ENCODE measurements at regions of chr19 and their contacts with region 1.

Region 1: DNA sequence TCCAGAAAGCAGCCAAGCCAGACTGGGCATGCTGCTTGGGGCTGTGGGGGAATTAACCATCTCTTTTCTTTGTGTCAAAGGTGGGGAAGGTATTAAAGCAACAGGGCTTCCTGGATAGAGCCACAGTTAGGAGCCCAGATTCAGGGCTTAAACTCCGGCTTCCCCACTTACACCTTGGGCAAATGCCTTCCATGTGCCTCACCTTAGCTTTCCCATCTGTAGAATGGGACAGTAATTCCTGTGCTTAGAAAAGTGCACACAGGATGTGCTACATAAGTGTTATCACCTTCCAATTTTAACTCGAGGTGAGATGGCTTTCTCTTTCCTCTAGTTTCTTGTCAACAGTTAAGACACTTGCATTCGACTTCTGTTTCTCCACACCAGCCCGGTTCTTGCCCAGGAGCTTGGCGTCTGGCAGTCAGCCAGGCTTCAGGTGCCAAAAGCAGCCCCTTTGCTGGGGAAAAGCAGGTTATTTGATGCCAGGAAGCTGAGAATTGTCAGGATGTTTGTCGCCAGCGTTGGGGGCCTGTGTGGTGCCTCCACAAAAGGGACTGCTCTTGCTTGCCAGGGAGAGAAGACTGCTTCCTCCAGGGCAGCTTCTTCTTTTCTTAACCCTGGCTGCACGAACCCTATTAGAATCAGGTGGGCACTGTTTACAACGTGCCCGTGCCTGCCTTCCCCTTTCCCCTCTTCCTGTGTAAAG is 79.2 kb downstream of the SIPA1L3 start:
- DNase-seq: no peak
- ATAC-seq: no peak
- H3K4me3 ChIP-seq: no peak overlapping the region
- H3K27ac ChIP-seq: no peak overlapping the region
- H3K4me1 ChIP-seq: 0 out of 2 replicates have a peak, but pooled peaks cover 2% of the 10 kb centered on the region
- H3K27me3 ChIP-seq: no peaks in the 10 kb centered on the region
- CTCF ChIP-seq: no peak

Region 2: DNA sequence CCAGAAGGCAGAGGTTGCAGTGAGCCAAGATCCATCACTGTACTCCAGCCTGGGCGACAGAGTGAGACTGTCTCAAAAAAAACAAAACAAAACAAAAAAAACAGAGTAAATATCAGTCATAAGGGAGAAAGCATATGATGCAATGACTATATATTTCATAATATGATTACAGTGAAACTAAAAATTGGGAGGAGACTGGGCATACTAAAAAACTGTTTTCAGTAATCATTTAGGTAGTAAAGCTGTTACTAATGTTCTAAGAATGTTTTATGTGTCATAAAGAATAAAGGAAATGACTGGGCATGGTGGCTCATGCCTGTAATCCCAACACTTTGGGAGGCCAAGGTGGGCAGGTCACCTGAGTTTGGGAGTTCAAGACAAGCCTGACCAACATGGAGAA is 222.7 kb before region 1 on chr19:
- CTCF ChIA-PET with region 1: no interaction called
- POLR2A ChIA-PET with region 1: no interaction called
- in situ Hi-C with region 1: no loop called
- intact Hi-C with region 1: no loop called
- DNase-seq: peak; percentile 8
- ATAC-seq: no peak
- H3K4me3 ChIP-seq: no peak overlapping the region
- H3K27ac ChIP-seq: no peak overlapping the region
- H3K4me1 ChIP-seq: no peaks in the 10 kb centered on the region
- H3K27me3 ChIP-seq: no peaks in the 10 kb centered on the region
- CTCF ChIP-seq: no peak

Region 3: DNA sequence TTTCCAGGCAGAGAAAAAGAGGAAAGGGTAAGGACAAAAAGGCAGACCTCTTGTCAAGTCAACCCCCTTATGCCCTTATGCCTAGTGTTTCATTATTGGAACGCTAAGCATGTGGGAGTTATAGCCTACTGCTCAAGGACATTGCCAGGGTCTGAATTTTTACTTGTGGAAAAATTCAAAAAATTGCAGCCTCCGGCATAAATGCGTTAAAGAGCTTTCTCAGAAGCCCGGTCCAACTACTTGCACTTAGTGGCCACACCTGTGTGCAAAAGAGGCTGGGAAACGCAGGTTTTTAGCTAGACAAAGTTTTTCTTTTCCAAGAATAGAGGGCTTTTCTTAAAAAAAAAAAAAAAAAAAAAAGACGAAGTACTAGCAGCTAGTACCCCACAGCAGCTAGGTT is 98.0 kb after region 1 on chr19:
- CTCF ChIA-PET with region 1: no interaction called
- POLR2A ChIA-PET with region 1: interaction called, 13 read pairs
- in situ Hi-C with region 1: no loop called
- intact Hi-C with region 1: no loop called
- DNase-seq: no peak
- ATAC-seq: no peak
- H3K4me3 ChIP-seq: no peak overlapping the region
- H3K27ac ChIP-seq: no peak overlapping the region
- H3K4me1 ChIP-seq: peaks cover 14% of the 10 kb centered on the region
- H3K27me3 ChIP-seq: no peaks in the 10 kb centered on the region
- CTCF ChIP-seq: no peak

Region 4: GRCh38 chr19:38351865-38352395 is 365.7 kb after region 1 on chr19:
- CTCF ChIA-PET with region 1: no interaction called
- POLR2A ChIA-PET with region 1: no interaction called
- in situ Hi-C with region 1: no loop called
- intact Hi-C with region 1: no loop called
- DNase-seq: no peak
- ATAC-seq: peak; percentile 49; the same call in 1 of the 2 replicates
- H3K4me3 ChIP-seq: no peak overlapping the region
- H3K27ac ChIP-seq: no peak overlapping the region
- H3K4me1 ChIP-seq: no peaks in the 10 kb centered on the region
- H3K27me3 ChIP-seq: no peaks in the 10 kb centered on the region
- CTCF ChIP-seq: no peak

Measured in Panc1 (cell line).